Activated CD4-positive, alpha-beta T cell treated with anti-CD3 and anti-CD28 coated beads, Interleukin-2, amount 10 ng/mL, durations not matched to agents 24 days and 14 days (primary cell): ENCODE measurements at regions of chr11 and their contacts with region 1.

Region 1: GRCh38 chr11:66344550-66345315 is at the start of gene BRMS1:
- DNase-seq: peak; percentile 99
- H3K4me3 Mint-ChIP-seq: peak within 1 kb of the TSS; percentile 95
- H3K27ac Mint-ChIP-seq: peak within 1 kb of the TSS; percentile 95
- H3K4me1 Mint-ChIP-seq: peaks cover 39% of the 10 kb centered on the region
- H3K27me3 Mint-ChIP-seq: peaks cover 3% of the 10 kb centered on the region
- total RNA-seq, gene BRMS1: 55.6 and 58.4 TPM in 2 replicates

Region 2: GRCh38 chr11:66242095-66242765 is 102.5 kb before region 1 on chr11:
- intact Hi-C with region 1: no loop called
- DNase-seq: no peak
- H3K4me3 Mint-ChIP-seq: no peak overlapping the region
- H3K27ac Mint-ChIP-seq: no peak overlapping the region
- H3K4me1 Mint-ChIP-seq: peaks cover 6% of the 10 kb centered on the region
- H3K27me3 Mint-ChIP-seq: no peaks in the 10 kb centered on the region

Region 3: GRCh38 chr11:66268283-66268951 is 76.3 kb before region 1 on chr11 and contains the start of gene RAB1B:
- intact Hi-C with region 1: loop called (anchors 5 kb)
- DNase-seq: peak; percentile 100
- H3K4me3 Mint-ChIP-seq: peak within 1 kb of the TSS; percentile 99
- H3K27ac Mint-ChIP-seq: peak within 1 kb of the TSS; percentile 98
- H3K4me1 Mint-ChIP-seq: peaks cover 27% of the 10 kb centered on the region
- H3K27me3 Mint-ChIP-seq: peaks cover 4% of the 10 kb centered on the region
- total RNA-seq, gene RAB1B: 117 and 123 TPM in 2 replicates

Region 4: DNA sequence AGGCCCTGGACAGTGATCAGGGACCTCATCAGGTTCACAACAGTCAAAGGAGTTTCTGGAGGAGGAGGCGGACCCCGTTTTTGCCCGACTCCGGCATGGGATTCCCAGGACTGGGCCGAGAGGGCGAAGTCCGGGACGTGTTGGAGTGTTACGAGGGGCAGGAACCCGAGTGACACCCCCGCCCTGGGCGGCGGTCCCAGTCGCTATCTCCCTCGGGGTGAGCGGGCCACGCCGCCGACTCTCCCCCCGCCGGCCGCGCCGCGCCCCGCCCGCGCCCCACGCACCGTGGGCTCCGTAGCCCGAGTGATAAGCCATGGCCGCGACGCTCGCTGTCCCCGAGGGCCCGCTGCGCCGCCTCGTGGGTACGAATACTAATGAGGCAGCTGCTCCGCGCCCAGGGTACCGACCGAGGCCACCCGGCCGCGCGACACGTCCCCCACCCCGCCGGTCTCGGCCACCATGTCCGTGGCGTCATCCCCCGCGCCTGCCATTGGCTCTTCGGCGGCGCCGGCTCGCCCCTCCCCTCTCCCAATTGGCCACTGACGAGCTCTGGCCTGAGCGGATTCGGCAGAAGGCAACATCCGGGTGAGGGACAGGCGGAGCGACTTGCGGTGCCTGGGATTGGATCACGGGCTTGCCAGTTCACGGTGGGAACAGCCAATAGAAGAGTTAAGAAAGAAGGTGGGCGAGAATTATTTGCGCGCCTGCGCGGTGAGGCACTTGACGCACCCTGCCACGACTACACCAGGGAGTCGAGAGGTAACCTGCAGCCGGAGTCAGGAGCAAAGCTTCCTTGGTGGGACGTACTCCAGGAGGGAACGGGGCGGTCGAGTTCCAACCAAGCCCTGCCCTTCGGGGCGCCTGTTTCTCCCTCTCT is 55.8 kb before region 1 on chr11 and contains the start of gene YIF1A:
- intact Hi-C with region 1: loop called (anchors 1 kb)
- DNase-seq: peak; percentile 100
- H3K4me3 Mint-ChIP-seq: peak within 1 kb of the TSS; percentile 84
- H3K27ac Mint-ChIP-seq: peak within 1 kb of the TSS; percentile 96
- H3K4me1 Mint-ChIP-seq: peaks cover 32% of the 10 kb centered on the region
- H3K27me3 Mint-ChIP-seq: peaks cover 30% of the 10 kb centered on the region
- total RNA-seq, gene YIF1A: 108 and 119 TPM in 2 replicates

Region 5: DNA sequence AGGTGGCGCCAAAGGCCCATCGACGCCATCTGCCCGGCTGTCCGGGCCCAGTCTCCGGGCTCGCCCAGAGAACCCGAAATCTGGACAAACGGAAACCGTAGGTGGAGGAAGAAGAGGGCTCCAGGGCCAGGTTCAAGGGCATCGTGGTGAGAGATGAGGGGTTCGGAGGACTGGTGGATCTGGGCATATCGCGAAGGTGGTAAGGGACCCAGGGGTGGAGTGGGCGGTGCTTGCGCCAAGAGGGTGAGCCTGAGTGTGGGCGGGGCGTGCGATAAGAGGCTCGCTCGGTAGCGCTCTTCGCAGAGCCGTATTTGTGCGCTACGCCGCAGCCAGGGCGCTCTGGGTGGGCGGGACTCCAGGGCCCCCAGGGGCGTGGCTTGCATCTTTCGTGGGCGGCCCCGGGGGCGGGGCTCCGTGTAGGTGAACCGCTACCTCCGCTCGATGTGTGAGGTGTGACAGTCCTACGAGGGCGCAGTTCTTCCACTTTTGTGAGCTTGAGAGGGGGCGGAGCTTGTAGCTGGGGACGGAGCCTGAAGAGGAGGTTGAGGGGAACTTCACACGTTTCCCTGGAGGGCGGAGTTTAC is 32.7 kb before region 1 on chr11:
- intact Hi-C with region 1: loop called (anchors 1 kb)
- DNase-seq: peak; percentile 99
- H3K4me3 Mint-ChIP-seq: peak overlapping the region; percentile 91
- H3K27ac Mint-ChIP-seq: peak overlapping the region; percentile 97
- H3K4me1 Mint-ChIP-seq: peaks cover 19% of the 10 kb centered on the region
- H3K27me3 Mint-ChIP-seq: peaks cover 7% of the 10 kb centered on the region

Region 6: GRCh38 chr11:66371627-66372415 is 27.1 kb after region 1 on chr11 and contains the start of gene SLC29A2:
- intact Hi-C with region 1: loop called (anchors 1 kb)
- DNase-seq: peak; percentile 93
- H3K4me3 Mint-ChIP-seq: peak within 1 kb of the TSS; percentile 88
- H3K27ac Mint-ChIP-seq: peak within 1 kb of the TSS; percentile 89
- H3K4me1 Mint-ChIP-seq: peaks cover 17% of the 10 kb centered on the region
- H3K27me3 Mint-ChIP-seq: peaks cover 2% of the 10 kb centered on the region
- total RNA-seq, gene SLC29A2: 17.4 and 18.9 TPM in 2 replicates

Region 7: GRCh38 chr11:66386171-66387069 is 41.7 kb after region 1 on chr11:
- intact Hi-C with region 1: loop called (anchors 5 kb)
- DNase-seq: peak; percentile 95
- H3K4me3 Mint-ChIP-seq: peak overlapping the region; percentile 58
- H3K27ac Mint-ChIP-seq: no peak overlapping the region
- H3K4me1 Mint-ChIP-seq: peaks cover 8% of the 10 kb centered on the region
- H3K27me3 Mint-ChIP-seq: peaks cover 5% of the 10 kb centered on the region

Region 8: GRCh38 chr11:66958232-66958955 is 613.7 kb after region 1 on chr11 and contains the start of gene PC:
- intact Hi-C with region 1: loop called (anchors 5 kb)
- DNase-seq: peak; percentile 99
- H3K4me3 Mint-ChIP-seq: peak within 1 kb of the TSS; percentile 85
- H3K27ac Mint-ChIP-seq: peak within 1 kb of the TSS; percentile 94
- H3K4me1 Mint-ChIP-seq: peaks cover 20% of the 10 kb centered on the region
- H3K27me3 Mint-ChIP-seq: no peaks in the 10 kb centered on the region
- total RNA-seq, gene PC: 13.1 and 15.7 TPM in 2 replicates